ENCODE measurements at regions of chr3 and their contacts with region 1.

Region 1: GRCh38 chr3:12830785-12831156 is 10.6 kb downstream of the RPL32 start:
- DNase-seq: no peak
- ATAC-seq: no peak
- H3K4me3 Mint-ChIP-seq: no peak overlapping the region
- H3K27ac Mint-ChIP-seq: peak overlapping the region; percentile 66; the same call in 1 of the 2 replicates
- H3K4me1 Mint-ChIP-seq: peaks cover 52% of the 10 kb centered on the region
- H3K27me3 Mint-ChIP-seq: no peaks in the 10 kb centered on the region
- CTCF ChIP-seq: 0 out of 2 replicates have a peak, but pooled peaks have one; percentile 15

Region 2: GRCh38 chr3:12841149-12841970 is 10.6 kb after region 1 on chr3 and contains the start of gene RPL32:
- CTCF ChIA-PET with region 1: interaction called, 15 read pairs
- POLR2A ChIA-PET with region 1: interaction called, 6 read pairs
- DNase-seq: peak; percentile 76
- ATAC-seq: peak; percentile 78
- H3K4me3 Mint-ChIP-seq: peak within 1 kb of the TSS; percentile 98
- H3K27ac Mint-ChIP-seq: peak within 1 kb of the TSS; percentile 99
- H3K4me1 Mint-ChIP-seq: peaks cover 51% of the 10 kb centered on the region
- H3K27me3 Mint-ChIP-seq: peaks cover 4% of the 10 kb centered on the region
- CTCF ChIP-seq: peak; percentile 18; the same call in 1 of the 2 replicates
- total RNA-seq, gene RPL32: 1,643 to 1,831 TPM (median 1,818 TPM) in 3 replicates

Region 3: GRCh38 chr3:13189639-13190377 is 359.0 kb after region 1 on chr3:
- CTCF ChIA-PET with region 1: no interaction called
- POLR2A ChIA-PET with region 1: no interaction called
- DNase-seq: no peak
- ATAC-seq: no peak
- H3K4me3 Mint-ChIP-seq: no peak overlapping the region
- H3K27ac Mint-ChIP-seq: peak overlapping the region; percentile 73; the same call in 1 of the 2 replicates
- H3K4me1 Mint-ChIP-seq: peaks cover 22% of the 10 kb centered on the region
- H3K27me3 Mint-ChIP-seq: no peaks in the 10 kb centered on the region
- CTCF ChIP-seq: no peak